Spleen (tissue), 13 donors: ENCODE measurements at regions of chr3 and their contacts with region 1.

Region 1: DNA sequence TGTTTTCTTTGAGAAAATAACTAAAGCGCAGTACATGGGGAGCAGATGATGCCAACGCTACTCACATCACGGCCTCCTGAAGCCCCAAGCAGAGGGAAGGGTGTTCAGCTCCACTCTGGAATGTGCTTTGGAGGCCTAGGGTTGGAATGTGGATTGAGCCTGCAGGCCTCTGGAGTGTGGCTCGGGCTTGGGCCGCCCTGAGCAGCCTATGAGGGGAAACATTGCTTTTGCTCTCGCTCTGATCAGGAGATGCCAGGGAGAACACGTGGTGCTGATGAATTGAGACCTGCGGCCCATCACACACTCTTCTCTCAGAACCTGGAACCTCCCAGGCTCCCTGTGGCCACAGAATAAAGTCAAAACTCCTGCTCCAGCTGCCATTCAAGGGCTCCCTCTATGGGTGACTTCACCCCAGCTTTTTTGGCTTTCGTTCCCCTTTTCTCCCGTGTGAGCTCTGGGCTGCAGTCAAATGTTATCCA is 23.3 kb downstream of the CCDC13 start:
- DNase-seq: peak; percentile 63
- H3K4me3 ChIP-seq: no peak overlapping the region
- H3K27ac ChIP-seq: no peak overlapping the region
- H3K4me1 ChIP-seq: peaks cover 0 to 14% (median 0%) of the 10 kb centered on the region in 6 donors
- H3K27me3 ChIP-seq: no peaks in the 10 kb centered on the region
- CTCF ChIP-seq: peak in 4 of 11 experiments; percentile 22 to 52 (median 33)
- POLR2A ChIP-seq: no peak

Region 2: GRCh38 chr3:42572278-42572677 is 177.5 kb before region 1 on chr3:
- intact Hi-C with region 1: loop called (anchors 10 kb)
- DNase-seq: no peak
- H3K4me3 ChIP-seq: no peak overlapping the region
- H3K27ac ChIP-seq: no peak overlapping the region
- H3K4me1 ChIP-seq: peaks cover 0 to 3% (median 0%) of the 10 kb centered on the region in 6 donors
- H3K27me3 ChIP-seq: no peaks in the 10 kb centered on the region
- CTCF ChIP-seq: peak in 5 of 11 experiments; percentile 24 to 52 (median 36)
- POLR2A ChIP-seq: no peak

Region 3: DNA sequence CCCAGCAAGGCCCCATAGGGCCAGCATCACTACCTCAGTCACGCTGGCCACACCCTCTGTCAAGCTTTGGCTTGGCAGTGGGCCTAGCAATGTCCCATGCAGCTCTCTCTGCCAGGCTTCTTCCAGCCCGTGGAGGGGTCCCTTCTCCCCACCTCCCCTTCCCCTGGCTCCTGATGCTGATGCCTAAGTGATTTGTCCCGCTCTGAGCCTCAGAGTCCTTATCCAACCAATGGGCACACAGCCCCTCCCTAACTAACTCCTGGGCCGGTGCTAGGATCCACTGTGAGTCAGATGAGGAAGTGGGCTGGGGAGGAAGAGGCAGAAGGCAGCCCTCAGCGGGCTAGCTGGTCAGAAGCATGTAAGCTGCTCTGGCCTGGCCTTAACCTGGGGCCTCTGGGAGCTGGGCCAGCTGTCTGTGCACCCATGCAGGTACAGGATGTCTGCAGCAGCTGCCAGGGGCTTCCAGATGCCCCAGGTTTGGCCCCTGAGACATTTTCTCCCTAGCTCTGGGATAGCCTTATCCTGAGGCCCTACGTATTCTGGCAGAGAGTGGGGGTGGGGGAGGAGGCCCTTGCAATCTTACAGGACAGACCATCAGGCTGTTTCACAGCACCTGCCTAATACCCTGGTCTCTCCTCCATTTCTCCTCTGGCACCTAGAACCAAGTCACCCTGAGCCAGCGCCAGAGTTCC is 97.0 kb before region 1 on chr3:
- intact Hi-C with region 1: loop called (anchors 10 kb)
- DNase-seq: peak; percentile 91
- H3K4me3 ChIP-seq: peak overlapping the region in 7 of 8 donors; percentile 47 to 86 (median 65)
- H3K27ac ChIP-seq: peak overlapping the region in 7 of 8 donors; percentile 69 to 90 (median 79)
- H3K4me1 ChIP-seq: peaks cover 17 to 87% (median 39%) of the 10 kb centered on the region in 6 donors
- H3K27me3 ChIP-seq: peaks cover 0 to 15% (median 0%) of the 10 kb centered on the region in 7 donors
- CTCF ChIP-seq: no peak
- POLR2A ChIP-seq: peak in 1 of 3 donors; percentile 25

Region 4: GRCh38 chr3:42831321-42831713 is 81.5 kb after region 1 on chr3:
- intact Hi-C with region 1: no loop called
- DNase-seq: peak; percentile 89
- H3K4me3 ChIP-seq: no peak overlapping the region
- H3K27ac ChIP-seq: no peak overlapping the region
- H3K4me1 ChIP-seq: peaks cover 0 to 12% (median 4%) of the 10 kb centered on the region in 6 donors
- H3K27me3 ChIP-seq: no peaks in the 10 kb centered on the region
- CTCF ChIP-seq: peak; percentile 63 to 91 (median 87)
- POLR2A ChIP-seq: no peak